ENCODE measurements at regions of chr17 and their contacts with region 1.

Region 1: DNA sequence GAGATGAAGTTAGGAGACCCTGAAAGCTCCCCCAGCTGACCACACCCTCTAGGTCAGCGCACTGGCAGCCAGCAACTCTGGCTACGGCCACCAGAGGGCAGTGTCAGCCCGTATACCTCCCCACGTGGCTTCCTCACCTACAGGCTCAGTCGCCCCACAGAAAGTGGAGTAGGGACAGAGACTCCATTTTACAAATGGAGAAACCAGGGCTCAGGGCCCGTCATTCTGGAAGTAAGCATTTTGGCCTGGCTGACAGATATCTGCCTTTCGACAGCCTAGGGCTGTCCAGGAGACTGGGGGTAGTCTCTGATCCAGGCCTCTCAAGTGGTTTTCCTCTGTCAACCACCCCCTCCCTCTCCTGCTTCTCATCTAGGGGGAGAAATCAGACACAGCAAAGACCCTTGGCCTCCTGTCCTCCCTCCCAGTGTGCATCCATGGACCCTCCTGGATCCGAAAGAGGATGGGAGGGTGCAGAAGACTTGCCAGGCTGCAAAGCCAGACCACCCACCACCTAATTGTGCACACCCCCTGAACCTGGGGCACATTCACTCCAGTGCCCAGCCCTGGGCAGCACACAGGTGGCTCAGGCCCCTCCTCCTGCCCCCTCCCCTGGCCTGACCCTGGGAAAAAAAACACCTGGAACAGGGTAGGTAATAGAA is 3.8 kb upstream of the HAP1 start:
- DNase-seq: peak; percentile 89 to 96
- ATAC-seq: peak; percentile 55 to 82
- H3K4me3 ChIP-seq: no peak overlapping the region
- H3K27ac ChIP-seq: peak overlapping the region; percentile 68 to 85
- H3K4me1 ChIP-seq: peaks cover 38% of the 10 kb centered on the region
- CTCF ChIP-seq: peak; percentile 99
- EP300 ChIP-seq: no peak
- POLR2A ChIP-seq: no peak
- RAD21 ChIP-seq: peak; percentile 100

Region 2: GRCh38 chr17:41717408-41718286 is 20.6 kb before region 1 on chr17:
- CTCF ChIA-PET with region 1: interaction called, 46 read pairs
- POLR2A ChIA-PET with region 1: interaction called, 10 read pairs
- DNase-seq: peak in 1 of 2 experiments; percentile 70
- ATAC-seq: peak; percentile 80 to 84
- H3K4me3 ChIP-seq: no peak overlapping the region
- H3K27ac ChIP-seq: peak overlapping the region; percentile 34 to 65
- H3K4me1 ChIP-seq: peaks cover 20% of the 10 kb centered on the region
- CTCF ChIP-seq: no peak
- EP300 ChIP-seq: 0 out of 5 replicates have a peak, but pooled peaks of 1 of the 2 experiments have one; percentile 29
- POLR2A ChIP-seq: no peak
- RAD21 ChIP-seq: no peak

Region 3: DNA sequence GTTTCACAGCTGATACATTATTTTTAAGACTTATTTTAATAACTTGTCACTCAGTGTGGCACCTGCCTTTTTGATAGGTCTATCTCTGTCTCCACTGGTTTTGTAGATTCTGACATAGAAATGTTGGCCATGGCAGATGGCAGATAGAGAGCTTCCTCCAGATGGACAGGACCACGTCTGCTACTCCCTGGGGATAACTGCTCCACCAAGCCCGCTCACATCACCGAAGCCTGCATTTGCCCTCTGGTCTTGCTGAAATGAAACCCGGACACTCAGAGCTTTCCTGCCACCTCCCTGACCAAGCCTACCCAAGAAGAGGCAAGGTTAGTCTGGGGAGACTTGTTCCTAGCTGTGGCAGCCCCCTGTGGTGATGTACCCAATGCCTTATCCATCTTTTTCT is 12.7 kb after region 1 on chr17:
- CTCF ChIA-PET with region 1: interaction called, 38 read pairs
- POLR2A ChIA-PET with region 1: interaction called, 3 read pairs
- DNase-seq: no peak
- ATAC-seq: no peak
- H3K4me3 ChIP-seq: no peak overlapping the region
- H3K27ac ChIP-seq: no peak overlapping the region
- H3K4me1 ChIP-seq: no peaks in the 10 kb centered on the region
- CTCF ChIP-seq: no peak
- EP300 ChIP-seq: no peak
- POLR2A ChIP-seq: no peak
- RAD21 ChIP-seq: no peak

Region 4: GRCh38 chr17:41801374-41802271 is 63.4 kb after region 1 on chr17:
- CTCF ChIA-PET with region 1: interaction called, 3,262 read pairs
- POLR2A ChIA-PET with region 1: interaction called, 12 read pairs
- DNase-seq: peak; percentile 86 to 88
- ATAC-seq: peak; percentile 80 to 86
- H3K4me3 ChIP-seq: no peak overlapping the region
- H3K27ac ChIP-seq: peak overlapping the region; percentile 80 to 86
- H3K4me1 ChIP-seq: peaks cover 23% of the 10 kb centered on the region
- CTCF ChIP-seq: peak; percentile 98
- EP300 ChIP-seq: peak in 1 of 2 experiments; percentile 23; a peak in 1 of 5 replicates
- POLR2A ChIP-seq: no peak
- RAD21 ChIP-seq: peak; percentile 99

Region 5: GRCh38 chr17:41885733-41886132 is 147.5 kb after region 1 on chr17:
- CTCF ChIA-PET with region 1: interaction called, 11 read pairs
- POLR2A ChIA-PET with region 1: interaction called, 4 read pairs
- DNase-seq: peak; percentile 48 to 66
- ATAC-seq: peak; percentile 62 to 67
- H3K4me3 ChIP-seq: no peak overlapping the region
- H3K27ac ChIP-seq: peak overlapping the region in 1 of 2 experiments; percentile 1; a peak in 1 of 6 replicates
- H3K4me1 ChIP-seq: peaks cover 10% of the 10 kb centered on the region; the same call in 2 of the 3 replicates
- CTCF ChIP-seq: peak; percentile 54
- EP300 ChIP-seq: no peak
- POLR2A ChIP-seq: no peak
- RAD21 ChIP-seq: peak; percentile 60 to 69

Measured in A549 (cell line).